Motor neuron (in vitro differentiated cells): ENCODE measurements at regions of chr1 and their contacts with region 1.

Region 1: DNA sequence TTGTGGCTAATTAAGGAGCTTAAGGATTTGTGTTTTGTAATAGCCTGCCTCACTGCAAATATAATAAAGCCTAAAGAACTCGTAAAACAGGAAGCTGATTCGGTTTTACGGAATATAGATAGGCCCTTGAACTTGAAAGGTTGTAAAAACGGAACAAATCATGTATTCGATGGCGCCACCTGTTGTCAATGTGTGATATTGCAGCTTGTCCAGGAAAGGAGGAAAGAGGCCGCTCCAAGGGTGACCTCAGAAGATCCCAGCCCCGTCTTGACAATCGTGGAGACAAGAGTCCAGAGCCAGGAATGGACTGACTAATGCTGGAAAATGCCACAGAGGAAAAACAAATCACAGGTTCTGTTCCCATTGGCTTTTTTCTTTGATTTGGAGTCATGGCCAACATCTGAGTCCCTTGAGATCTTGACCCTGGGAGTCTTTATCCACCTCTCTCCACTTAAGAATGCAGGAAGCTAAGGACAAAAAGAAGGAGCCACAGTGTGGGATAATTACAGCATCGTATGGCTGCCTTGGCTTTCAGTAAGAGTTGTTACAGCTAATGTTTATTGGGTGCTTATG is 7.0 kb upstream of the IGSF21 start:
- ATAC-seq: peak; percentile 25 to 79 (median 68)
- H3K4me3 ChIP-seq: no peak overlapping the region
- H3K27ac ChIP-seq: no peak overlapping the region
- H3K4me1 ChIP-seq: peaks cover 0 to 9% of the 10 kb centered on the region in 2 donors

Region 2: DNA sequence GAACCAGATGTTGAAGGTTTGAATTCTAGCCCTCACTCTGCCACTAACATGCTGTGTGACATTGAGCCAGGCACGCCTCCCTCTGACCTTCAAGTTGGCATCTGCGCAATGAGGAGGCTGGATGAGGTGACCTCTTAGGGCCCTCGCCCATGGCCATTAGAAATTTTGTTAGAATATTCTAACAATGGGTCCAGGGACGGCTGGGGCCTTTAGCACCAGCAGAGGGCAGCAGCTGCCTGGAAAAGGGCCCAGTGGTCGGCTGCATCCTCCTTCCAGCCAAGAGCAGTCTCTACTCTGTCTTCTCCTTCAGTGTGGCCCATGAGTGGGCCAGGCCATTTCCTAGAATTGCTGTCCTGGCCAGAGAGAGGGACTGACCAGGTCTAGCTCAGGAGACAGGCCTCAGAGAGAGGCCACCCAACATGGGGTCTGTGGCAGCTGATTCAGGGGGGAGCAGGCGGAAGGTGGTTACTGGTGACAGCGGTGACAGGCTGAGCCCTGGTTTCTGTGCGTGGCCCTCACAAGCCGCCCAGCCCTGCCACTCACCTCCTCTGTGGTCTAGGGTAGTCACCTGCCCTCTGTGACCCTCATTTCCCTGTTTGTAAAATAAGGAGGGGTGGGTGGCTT is 446.7 kb before region 1 on chr1:
- in situ Hi-C with region 1: loop called in 4 of 9 experiments (anchors 10 to 25 kb)
- ATAC-seq: peak; percentile 84 to 97 (median 88)
- H3K4me3 ChIP-seq: no peak overlapping the region
- H3K27ac ChIP-seq: peak overlapping the region in 1 of 2 donors; percentile 28
- H3K4me1 ChIP-seq: peaks cover 11 to 15% of the 10 kb centered on the region in 2 donors

Region 3: GRCh38 chr1:18010945-18011344 is 89.6 kb before region 1 on chr1:
- in situ Hi-C with region 1: no loop called
- ATAC-seq: no peak
- H3K4me3 ChIP-seq: no peak overlapping the region
- H3K27ac ChIP-seq: no peak overlapping the region
- H3K4me1 ChIP-seq: peaks cover 0 to 6% of the 10 kb centered on the region in 2 donors